Ovary (tissue), 10 donors: ENCODE measurements at regions of chr12 and their contacts with region 1.

Region 1: DNA sequence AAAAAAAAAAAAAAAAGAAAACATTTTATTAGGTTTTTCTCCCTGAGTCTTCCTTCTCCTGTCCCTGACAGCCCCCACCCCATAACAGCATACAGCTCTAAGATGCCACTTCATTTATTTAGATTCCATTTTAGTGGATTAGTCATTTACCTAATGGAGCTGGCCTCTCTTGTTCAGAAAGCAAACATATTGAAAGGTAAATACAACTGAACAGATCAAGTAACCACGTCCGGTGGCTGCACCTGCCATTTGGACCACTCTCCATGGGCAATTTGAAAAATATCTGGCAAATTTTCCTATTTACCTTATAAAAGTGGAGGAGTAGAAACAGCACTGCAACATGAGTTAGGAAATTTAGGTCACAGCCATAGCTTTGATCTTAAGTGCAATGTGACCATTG is 254.6 kb downstream of the C12orf42 start:
- DNase-seq: no peak
- H3K4me3 ChIP-seq: no peak overlapping the region
- H3K27ac ChIP-seq: no peak overlapping the region
- H3K4me1 ChIP-seq: no peaks in the 10 kb centered on the region
- H3K27me3 ChIP-seq: no peaks in the 10 kb centered on the region
- CTCF ChIP-seq: no peak
- EP300 ChIP-seq: no peak
- POLR2A ChIP-seq: no peak

Region 2: DNA sequence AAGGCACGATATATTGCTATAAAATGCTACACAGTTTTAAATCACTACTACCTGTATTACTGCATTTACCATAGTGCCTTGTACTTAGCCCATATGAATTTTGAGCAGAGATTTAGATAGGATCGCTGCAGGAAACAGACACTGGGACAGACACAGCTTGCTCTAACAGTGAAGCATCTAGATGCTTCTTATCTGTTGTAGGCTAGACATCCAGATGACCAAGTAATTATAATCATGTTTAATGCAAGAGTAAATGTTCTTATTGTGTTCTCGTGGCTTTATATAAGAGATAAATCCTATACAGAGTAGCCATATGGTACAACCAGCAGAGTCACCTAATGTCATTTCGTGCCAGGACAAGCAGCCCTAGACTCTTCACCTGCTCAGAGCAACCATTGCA is 190.9 kb before region 1 on chr12:
- intact Hi-C with region 1: loop called in 1 of 4 experiments (anchors 2 kb)
- DNase-seq: no peak
- H3K4me3 ChIP-seq: no peak overlapping the region
- H3K27ac ChIP-seq: no peak overlapping the region
- H3K4me1 ChIP-seq: no peaks in the 10 kb centered on the region
- H3K27me3 ChIP-seq: no peaks in the 10 kb centered on the region
- CTCF ChIP-seq: no peak
- EP300 ChIP-seq: no peak
- POLR2A ChIP-seq: no peak

Region 3: DNA sequence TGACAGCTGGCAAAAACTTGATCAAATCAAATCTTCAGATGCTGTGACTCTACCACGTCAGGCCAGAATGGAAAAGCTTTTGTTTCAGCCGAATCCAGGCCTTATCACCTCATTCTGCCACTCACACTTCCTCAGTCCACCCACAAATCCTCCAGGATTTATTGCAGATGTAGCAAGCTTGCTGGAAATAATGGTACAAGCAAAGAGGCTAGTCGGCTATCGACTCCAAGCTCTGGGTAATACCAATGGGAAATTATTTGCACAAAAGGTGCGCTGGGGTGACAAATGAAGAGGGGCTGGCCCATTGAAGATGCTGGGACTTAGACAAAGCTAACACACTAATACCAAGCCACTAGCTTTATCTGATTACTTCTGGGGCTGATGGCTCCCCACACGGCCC is 33.2 kb before region 1 on chr12:
- intact Hi-C with region 1: no loop called
- DNase-seq: no peak
- H3K4me3 ChIP-seq: no peak overlapping the region
- H3K27ac ChIP-seq: no peak overlapping the region
- H3K4me1 ChIP-seq: no peaks in the 10 kb centered on the region
- H3K27me3 ChIP-seq: no peaks in the 10 kb centered on the region
- CTCF ChIP-seq: no peak
- EP300 ChIP-seq: no peak
- POLR2A ChIP-seq: no peak

Region 4: DNA sequence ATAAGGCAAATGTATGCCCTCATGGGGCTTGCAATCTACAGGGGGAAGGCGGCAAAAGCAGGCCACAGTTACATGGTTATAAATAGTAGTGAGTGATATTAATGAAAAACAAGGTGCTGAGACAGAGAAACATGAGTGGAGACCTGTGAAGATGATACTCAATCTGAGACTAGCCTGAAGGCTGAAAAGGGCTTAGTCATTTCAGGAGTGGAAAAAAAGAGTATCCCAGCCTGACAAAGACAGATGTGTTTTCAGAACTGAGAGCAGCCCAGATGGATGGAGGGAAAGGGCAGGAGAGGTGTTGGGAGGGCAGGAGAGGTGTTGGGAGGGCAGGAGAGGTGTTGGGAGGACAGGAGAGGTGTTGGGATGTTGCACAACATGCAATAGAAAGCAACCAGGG is 72.7 kb after region 1 on chr12:
- intact Hi-C with region 1: loop called in 1 of 4 experiments (anchors 2 kb)
- DNase-seq: no peak
- H3K4me3 ChIP-seq: no peak overlapping the region
- H3K27ac ChIP-seq: no peak overlapping the region
- H3K4me1 ChIP-seq: no peaks in the 10 kb centered on the region
- H3K27me3 ChIP-seq: no peaks in the 10 kb centered on the region
- CTCF ChIP-seq: no peak
- EP300 ChIP-seq: no peak
- POLR2A ChIP-seq: no peak